Heart left ventricle (tissue), 16 donors: ENCODE measurements at regions of chr5 and their contacts with region 1.

Region 1: GRCh38 chr5:74206571-74207550 is 433.7 kb downstream of the ENC1 start:
- DNase-seq: peak; percentile 34 to 69 (median 56)
- ATAC-seq: peak in 3 of 4 donors; percentile 64 to 78 (median 68)
- H3K4me3 ChIP-seq: no peak overlapping the region
- H3K27ac ChIP-seq: no peak overlapping the region
- H3K4me1 ChIP-seq: peaks cover 0 to 19% (median 4%) of the 10 kb centered on the region in 12 donors
- H3K27me3 ChIP-seq: no peaks in the 10 kb centered on the region
- CTCF ChIP-seq: no peak
- POLR2A ChIP-seq: no peak

Region 2: GRCh38 chr5:74196233-74196632 is 10.6 kb before region 1 on chr5:
- intact Hi-C with region 1: loop called in 1 of 10 experiments (anchors 1 kb)
- DNase-seq: no peak
- ATAC-seq: no peak
- H3K4me3 ChIP-seq: no peak overlapping the region
- H3K27ac ChIP-seq: no peak overlapping the region
- H3K4me1 ChIP-seq: peaks cover 0 to 28% (median 7%) of the 10 kb centered on the region in 12 donors
- H3K27me3 ChIP-seq: no peaks in the 10 kb centered on the region
- CTCF ChIP-seq: no peak
- POLR2A ChIP-seq: no peak

Region 3: DNA sequence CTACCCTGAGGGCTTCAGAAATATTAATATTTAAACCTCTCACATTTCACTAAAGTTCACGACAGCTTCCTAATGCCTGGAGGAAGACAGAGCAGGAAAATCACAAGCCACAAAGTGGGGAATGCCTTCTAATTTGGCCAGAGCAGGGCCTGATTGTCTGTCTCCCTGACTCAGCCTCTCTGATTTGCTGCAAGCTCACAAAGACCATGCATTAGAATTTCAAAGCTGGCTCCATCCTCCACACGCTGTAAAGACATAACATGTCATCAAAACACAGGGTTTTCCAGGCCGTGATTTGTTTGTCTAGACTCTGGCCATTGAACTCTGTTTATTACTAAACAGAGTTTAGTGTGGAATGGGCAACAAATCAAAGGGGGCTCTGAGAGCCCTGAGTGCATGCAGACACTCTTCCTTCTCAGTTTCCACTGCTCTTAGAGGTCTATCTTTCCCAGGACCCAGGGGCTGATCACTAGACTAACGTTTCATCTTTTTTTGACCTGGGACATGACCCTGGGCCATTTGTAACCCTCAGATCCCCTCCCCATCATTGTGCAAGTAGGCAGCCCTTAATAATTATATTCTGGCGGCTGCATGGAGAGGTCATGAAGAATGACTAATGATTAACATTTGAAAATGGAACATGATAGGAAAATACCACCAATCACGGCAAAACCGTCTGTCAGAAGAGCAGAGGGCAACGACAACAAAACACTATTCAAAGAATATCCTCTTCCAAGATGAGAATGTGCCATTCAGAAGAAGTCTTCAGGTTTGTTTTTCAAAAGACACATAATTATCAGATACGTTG is 293.5 kb after region 1 on chr5:
- intact Hi-C with region 1: no loop called
- DNase-seq: no peak
- ATAC-seq: no peak
- H3K4me3 ChIP-seq: no peak overlapping the region
- H3K27ac ChIP-seq: no peak overlapping the region
- H3K4me1 ChIP-seq: peaks cover 0 to 23% (median 3%) of the 10 kb centered on the region in 12 donors
- H3K27me3 ChIP-seq: no peaks in the 10 kb centered on the region
- CTCF ChIP-seq: no peak
- POLR2A ChIP-seq: no peak